Prostate gland (tissue), 2 donors: ENCODE measurements at regions of chr2 and their contacts with region 1.

Region 1: GRCh38 chr2:121530212-121530705 is 421 bp upstream of the RNU4ATAC start:
- DNase-seq: peak; percentile 78
- H3K4me3 ChIP-seq: peak overlapping the region; percentile 62 to 66
- H3K27ac ChIP-seq: peak overlapping the region; percentile 92 to 95
- H3K4me1 ChIP-seq: no peaks in the 10 kb centered on the region
- H3K27me3 ChIP-seq: no peaks in the 10 kb centered on the region
- CTCF ChIP-seq: no peak
- POLR2A ChIP-seq: peak; percentile 3

Region 2: DNA sequence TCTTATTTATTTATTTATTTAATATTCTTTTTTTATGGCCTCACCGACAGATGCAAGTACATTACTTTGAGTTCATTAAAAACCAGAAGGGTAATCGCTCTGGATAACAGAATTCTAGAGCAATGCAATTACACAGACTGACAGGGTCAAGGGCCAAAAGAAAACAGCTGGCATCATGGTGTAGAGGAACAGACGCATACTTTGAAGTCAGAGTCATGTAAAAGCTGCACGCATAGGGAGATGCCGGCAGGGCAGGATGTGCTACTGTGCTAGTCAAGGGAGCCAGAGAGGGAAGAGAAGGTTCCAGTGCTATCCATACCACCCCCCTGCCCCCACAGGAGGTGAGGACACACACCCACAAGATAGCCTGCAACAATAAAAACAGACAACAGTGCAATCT is 130.1 kb before region 1 on chr2:
- intact Hi-C with region 1: loop called (anchors 10 kb)
- DNase-seq: no peak
- H3K4me3 ChIP-seq: no peak overlapping the region
- H3K27ac ChIP-seq: no peak overlapping the region
- H3K4me1 ChIP-seq: no peaks in the 10 kb centered on the region
- H3K27me3 ChIP-seq: no peaks in the 10 kb centered on the region
- CTCF ChIP-seq: no peak
- POLR2A ChIP-seq: no peak

Region 3: GRCh38 chr2:121649596-121650314 is 119.5 kb after region 1 on chr2:
- intact Hi-C with region 1: loop called (anchors 2 kb)
- DNase-seq: peak; percentile 95
- H3K4me3 ChIP-seq: peak overlapping the region; percentile 78 to 90
- H3K27ac ChIP-seq: peak overlapping the region; percentile 96 to 98
- H3K4me1 ChIP-seq: peaks cover 3% of the 10 kb centered on the region
- H3K27me3 ChIP-seq: no peaks in the 10 kb centered on the region
- CTCF ChIP-seq: peak in 1 of 4 experiments; percentile 5
- POLR2A ChIP-seq: no peak

Region 4: GRCh38 chr2:121722479-121722878 is 192.2 kb after region 1 on chr2:
- intact Hi-C with region 1: loop called (anchors 2 kb)
- DNase-seq: no peak
- H3K4me3 ChIP-seq: no peak overlapping the region
- H3K27ac ChIP-seq: no peak overlapping the region
- H3K4me1 ChIP-seq: no peaks in the 10 kb centered on the region
- H3K27me3 ChIP-seq: no peaks in the 10 kb centered on the region
- CTCF ChIP-seq: no peak
- POLR2A ChIP-seq: no peak

Region 5: GRCh38 chr2:121736462-121737341 is 206.4 kb after region 1 on chr2 and contains the start of gene NIFK:
- intact Hi-C with region 1: loop called (anchors 5 kb)
- DNase-seq: peak; percentile 99
- H3K4me3 ChIP-seq: peak within 1 kb of the TSS; percentile 61 to 72
- H3K27ac ChIP-seq: peak within 1 kb of the TSS; percentile 53 to 60
- H3K4me1 ChIP-seq: no peaks in the 10 kb centered on the region
- H3K27me3 ChIP-seq: no peaks in the 10 kb centered on the region
- CTCF ChIP-seq: peak in 2 of 4 experiments; percentile 8 to 10
- POLR2A ChIP-seq: peak; percentile 50
- total RNA-seq, gene NIFK: 57.7 to 66.6 TPM